Dendritic cell treated with granulocyte-macrophage colony-stimulating factor and Interleukin-4, amounts not matched to agents 40 ng/mL and 50 ng/mL, for 4 days (primary cell): ENCODE measurements at regions of chr2 and their contacts with region 1.

Region 1: GRCh38 chr2:201139836-201140604 is 24.1 kb downstream of the CFLAR start:
- H3K4me3 Mint-ChIP-seq: peak overlapping the region; percentile 37
- H3K27ac Mint-ChIP-seq: peak overlapping the region; percentile 65
- H3K4me1 Mint-ChIP-seq: peaks cover 38% of the 10 kb centered on the region
- H3K27me3 Mint-ChIP-seq: no peaks in the 10 kb centered on the region

Region 2: DNA sequence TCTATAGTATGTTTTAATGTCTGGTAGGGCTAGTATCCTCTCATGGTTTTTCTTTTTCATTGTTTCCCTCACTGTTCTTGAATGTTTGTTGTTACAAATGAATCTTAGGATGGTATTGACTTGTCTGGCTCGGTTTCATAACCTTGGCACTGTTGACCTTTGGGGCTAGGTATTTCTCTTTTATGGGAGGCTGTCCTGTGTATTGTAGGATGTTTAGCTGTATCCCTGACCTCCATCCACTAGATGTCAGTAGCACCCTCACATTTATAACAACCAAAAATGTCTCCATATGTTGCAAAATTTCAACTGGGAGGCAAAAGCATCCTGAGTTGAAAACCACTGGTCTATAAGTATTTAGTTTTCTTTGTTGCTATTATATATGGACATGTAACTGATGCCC is 561.2 kb before region 1 on chr2:
- intact Hi-C with region 1: no loop called
- H3K4me3 Mint-ChIP-seq: no peak overlapping the region
- H3K27ac Mint-ChIP-seq: no peak overlapping the region
- H3K4me1 Mint-ChIP-seq: no peaks in the 10 kb centered on the region
- H3K27me3 Mint-ChIP-seq: no peaks in the 10 kb centered on the region

Region 3: GRCh38 chr2:201158111-201158929 is 18.3 kb after region 1 on chr2:
- intact Hi-C with region 1: loop called (anchors 1 kb)
- H3K4me3 Mint-ChIP-seq: peak overlapping the region; percentile 45
- H3K27ac Mint-ChIP-seq: peak overlapping the region; percentile 94
- H3K4me1 Mint-ChIP-seq: peaks cover 60% of the 10 kb centered on the region
- H3K27me3 Mint-ChIP-seq: no peaks in the 10 kb centered on the region